ENCODE measurements at regions of chr17 and their contacts with region 1.

Region 1: DNA sequence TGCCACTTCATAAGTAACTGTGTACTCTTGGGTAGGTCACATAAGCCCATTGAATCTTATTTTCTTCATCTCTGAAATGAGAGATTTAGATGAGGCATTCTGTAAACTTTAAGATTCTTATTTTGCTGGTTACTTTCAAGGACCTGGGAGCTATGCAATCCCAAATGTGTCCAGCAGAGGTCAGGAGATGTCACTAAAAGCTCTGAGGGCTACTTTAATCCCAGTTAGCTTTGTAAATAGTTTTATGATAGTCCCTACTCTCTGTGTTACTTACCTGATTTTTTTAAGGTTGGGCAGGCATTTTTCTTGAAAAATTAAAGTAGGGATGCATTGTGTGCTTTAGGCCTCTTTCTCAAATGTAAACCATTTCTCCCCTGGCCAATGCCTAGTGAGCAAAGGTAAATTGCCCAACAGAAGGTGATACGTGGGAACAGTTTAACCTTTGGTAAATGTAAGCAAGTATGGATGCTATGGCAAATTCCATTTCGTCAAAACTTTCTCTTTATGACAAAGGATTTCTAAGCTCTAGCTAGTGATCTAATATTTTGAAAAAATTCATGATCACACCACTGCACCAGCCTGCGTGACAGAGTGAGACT is 57.1 kb upstream of the WSB1 start:
- DNase-seq: peak; percentile 55 to 83 (median 75)
- ATAC-seq: peak; percentile 92
- H3K4me3 ChIP-seq: no peak overlapping the region
- H3K4me3 Mint-ChIP-seq: no peak overlapping the region
- H3K27ac ChIP-seq: no peak overlapping the region
- H3K27ac Mint-ChIP-seq: no peak overlapping the region
- H3K4me1 ChIP-seq: no peaks in the 10 kb centered on the region
- H3K4me1 Mint-ChIP-seq: no peaks in the 10 kb centered on the region
- H3K27me3 ChIP-seq: no peaks in the 10 kb centered on the region
- H3K27me3 Mint-ChIP-seq: peaks cover 3% of the 10 kb centered on the region
- CTCF ChIP-seq: peak; percentile 94

Region 2: DNA sequence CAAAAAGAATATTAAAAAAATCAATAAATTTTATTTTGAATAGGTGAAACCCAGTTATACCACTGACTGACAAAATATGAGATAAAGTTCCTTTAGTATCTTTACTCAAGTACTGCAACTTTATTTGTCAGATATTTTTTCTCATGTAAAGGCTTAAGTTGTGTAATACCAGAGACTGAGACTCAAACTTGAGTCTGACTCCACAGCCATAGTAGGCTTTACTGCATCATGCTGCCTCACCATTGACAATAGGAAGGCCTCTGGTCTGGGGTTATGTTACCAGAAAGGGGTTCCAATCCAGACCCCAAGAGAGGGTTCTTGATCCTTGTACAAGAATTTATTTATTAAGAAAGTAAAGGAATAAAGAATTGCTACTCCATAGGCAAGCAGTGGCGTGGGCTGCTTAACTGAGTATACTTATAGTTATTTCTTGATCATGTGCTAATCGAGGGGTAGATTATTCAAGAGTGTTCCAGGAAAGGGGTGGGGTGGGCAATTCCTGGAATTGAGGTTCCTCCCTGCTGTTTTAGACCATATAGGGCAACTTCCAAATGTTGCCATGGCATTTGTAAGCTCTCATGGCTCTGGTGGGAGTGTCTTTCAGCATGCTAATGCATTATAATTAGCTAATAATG is 130.4 kb before region 1 on chr17:
- CTCF ChIA-PET with region 1: no interaction called
- POLR2A ChIA-PET with region 1: no interaction called
- intact Hi-C with region 1: no loop called
- DNase-seq: no peak
- ATAC-seq: no peak
- H3K4me3 ChIP-seq: no peak overlapping the region
- H3K4me3 Mint-ChIP-seq: no peak overlapping the region
- H3K27ac ChIP-seq: no peak overlapping the region
- H3K27ac Mint-ChIP-seq: no peak overlapping the region
- H3K4me1 ChIP-seq: no peaks in the 10 kb centered on the region
- H3K4me1 Mint-ChIP-seq: no peaks in the 10 kb centered on the region
- H3K27me3 ChIP-seq: no peaks in the 10 kb centered on the region
- H3K27me3 Mint-ChIP-seq: peaks cover 9% of the 10 kb centered on the region
- CTCF ChIP-seq: no peak

Region 3: DNA sequence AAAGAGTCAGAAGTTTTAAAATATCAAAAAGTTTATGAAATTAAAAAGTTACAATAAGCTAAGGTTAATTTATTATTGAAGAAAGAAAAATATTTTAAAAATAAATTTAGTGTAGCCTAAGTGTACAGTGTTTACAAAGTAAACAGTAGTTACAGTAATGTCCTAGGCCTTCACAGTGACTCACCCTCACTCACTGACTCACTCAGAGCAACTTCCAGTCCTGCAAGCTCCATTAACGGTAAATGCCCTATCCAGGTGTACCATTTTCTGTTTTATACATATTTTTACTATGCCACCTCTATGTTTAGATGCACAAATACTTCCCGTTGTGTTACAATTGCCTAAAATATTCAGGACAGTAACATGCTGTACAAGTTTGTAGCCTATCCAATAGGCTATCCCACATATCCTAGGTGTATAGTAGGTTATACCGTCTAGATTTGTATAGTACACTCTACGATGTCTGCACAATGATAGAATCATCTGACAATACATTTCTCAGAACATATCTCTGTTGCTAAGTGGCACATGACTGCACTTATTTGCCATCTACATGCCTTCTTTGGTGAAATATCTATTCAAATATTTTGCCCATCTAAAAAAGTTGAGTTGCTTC is 10.1 kb before region 1 on chr17:
- CTCF ChIA-PET with region 1: interaction called, 14 read pairs
- POLR2A ChIA-PET with region 1: no interaction called
- intact Hi-C with region 1: no loop called
- DNase-seq: no peak
- ATAC-seq: no peak
- H3K4me3 ChIP-seq: no peak overlapping the region
- H3K4me3 Mint-ChIP-seq: no peak overlapping the region
- H3K27ac ChIP-seq: no peak overlapping the region
- H3K27ac Mint-ChIP-seq: no peak overlapping the region
- H3K4me1 ChIP-seq: no peaks in the 10 kb centered on the region
- H3K4me1 Mint-ChIP-seq: no peaks in the 10 kb centered on the region
- H3K27me3 ChIP-seq: no peaks in the 10 kb centered on the region
- H3K27me3 Mint-ChIP-seq: no peaks in the 10 kb centered on the region
- CTCF ChIP-seq: no peak

Region 4: GRCh38 chr17:27303734-27304133 is 66.9 kb after region 1 on chr17:
- CTCF ChIA-PET with region 1: interaction called, 11 read pairs
- POLR2A ChIA-PET with region 1: no interaction called
- intact Hi-C with region 1: no loop called
- DNase-seq: no peak
- ATAC-seq: no peak
- H3K4me3 ChIP-seq: no peak overlapping the region
- H3K4me3 Mint-ChIP-seq: no peak overlapping the region
- H3K27ac ChIP-seq: no peak overlapping the region
- H3K27ac Mint-ChIP-seq: no peak overlapping the region
- H3K4me1 ChIP-seq: peaks cover 22% of the 10 kb centered on the region
- H3K4me1 Mint-ChIP-seq: peaks cover 47% of the 10 kb centered on the region
- H3K27me3 ChIP-seq: no peaks in the 10 kb centered on the region
- H3K27me3 Mint-ChIP-seq: no peaks in the 10 kb centered on the region
- CTCF ChIP-seq: no peak

Region 5: GRCh38 chr17:27353461-27354050 is 116.7 kb after region 1 on chr17:
- CTCF ChIA-PET with region 1: interaction called, 15 read pairs
- POLR2A ChIA-PET with region 1: no interaction called
- intact Hi-C with region 1: loop called (anchors 1 to 5 kb)
- DNase-seq: peak; percentile 67 to 94 (median 86)
- ATAC-seq: peak; percentile 95
- H3K4me3 ChIP-seq: peak overlapping the region; percentile 66 to 78
- H3K4me3 Mint-ChIP-seq: peak overlapping the region; percentile 77
- H3K27ac ChIP-seq: peak overlapping the region; percentile 68 to 84
- H3K27ac Mint-ChIP-seq: peak overlapping the region; percentile 93
- H3K4me1 ChIP-seq: peaks cover 18% of the 10 kb centered on the region
- H3K4me1 Mint-ChIP-seq: peaks cover 17% of the 10 kb centered on the region
- H3K27me3 ChIP-seq: no peaks in the 10 kb centered on the region
- H3K27me3 Mint-ChIP-seq: no peaks in the 10 kb centered on the region
- CTCF ChIP-seq: peak; percentile 91

Region 6: DNA sequence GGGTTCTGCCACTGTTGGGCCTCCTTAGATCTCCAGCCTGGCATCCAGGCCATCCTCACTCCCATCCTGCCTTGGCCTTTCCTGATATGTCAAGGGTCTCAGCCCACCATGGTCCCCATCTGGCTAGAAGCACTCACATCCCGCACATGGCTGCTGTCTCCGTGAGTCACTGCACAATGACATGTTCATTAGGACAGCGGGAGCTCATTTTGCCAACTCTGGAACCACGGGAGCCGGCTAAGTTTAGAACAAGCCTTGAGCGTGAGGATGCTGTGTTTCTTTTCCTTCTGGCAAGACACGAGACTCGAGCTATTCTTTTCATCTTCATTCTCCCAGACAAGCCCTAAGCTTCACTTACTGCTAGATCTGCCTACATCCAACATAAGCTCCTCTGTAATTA is 153.7 kb after region 1 on chr17:
- CTCF ChIA-PET with region 1: interaction called, 13 read pairs
- POLR2A ChIA-PET with region 1: no interaction called
- intact Hi-C with region 1: loop called (anchors 1 to 2 kb)
- DNase-seq: no peak
- ATAC-seq: no peak
- H3K4me3 ChIP-seq: no peak overlapping the region
- H3K4me3 Mint-ChIP-seq: no peak overlapping the region
- H3K27ac ChIP-seq: no peak overlapping the region
- H3K27ac Mint-ChIP-seq: no peak overlapping the region
- H3K4me1 ChIP-seq: no peaks in the 10 kb centered on the region
- H3K4me1 Mint-ChIP-seq: peaks cover 4% of the 10 kb centered on the region
- H3K27me3 ChIP-seq: no peaks in the 10 kb centered on the region
- H3K27me3 Mint-ChIP-seq: peaks cover 8% of the 10 kb centered on the region
- CTCF ChIP-seq: no peak

Region 7: GRCh38 chr17:27654654-27655524 is 418.1 kb after region 1 on chr17:
- CTCF ChIA-PET with region 1: interaction called, 12 read pairs
- POLR2A ChIA-PET with region 1: no interaction called
- intact Hi-C with region 1: loop called (anchors 1 to 5 kb)
- DNase-seq: peak; percentile 28 to 79 (median 59)
- ATAC-seq: peak; percentile 62
- H3K4me3 ChIP-seq: no peak overlapping the region
- H3K4me3 Mint-ChIP-seq: no peak overlapping the region
- H3K27ac ChIP-seq: no peak overlapping the region
- H3K27ac Mint-ChIP-seq: no peak overlapping the region
- H3K4me1 ChIP-seq: no peaks in the 10 kb centered on the region
- H3K4me1 Mint-ChIP-seq: no peaks in the 10 kb centered on the region
- H3K27me3 ChIP-seq: no peaks in the 10 kb centered on the region
- H3K27me3 Mint-ChIP-seq: peaks cover 3% of the 10 kb centered on the region
- CTCF ChIP-seq: peak; percentile 94